PC-3 (cell line): ENCODE measurements at regions of chr13 and their contacts with region 1.

Region 1: DNA sequence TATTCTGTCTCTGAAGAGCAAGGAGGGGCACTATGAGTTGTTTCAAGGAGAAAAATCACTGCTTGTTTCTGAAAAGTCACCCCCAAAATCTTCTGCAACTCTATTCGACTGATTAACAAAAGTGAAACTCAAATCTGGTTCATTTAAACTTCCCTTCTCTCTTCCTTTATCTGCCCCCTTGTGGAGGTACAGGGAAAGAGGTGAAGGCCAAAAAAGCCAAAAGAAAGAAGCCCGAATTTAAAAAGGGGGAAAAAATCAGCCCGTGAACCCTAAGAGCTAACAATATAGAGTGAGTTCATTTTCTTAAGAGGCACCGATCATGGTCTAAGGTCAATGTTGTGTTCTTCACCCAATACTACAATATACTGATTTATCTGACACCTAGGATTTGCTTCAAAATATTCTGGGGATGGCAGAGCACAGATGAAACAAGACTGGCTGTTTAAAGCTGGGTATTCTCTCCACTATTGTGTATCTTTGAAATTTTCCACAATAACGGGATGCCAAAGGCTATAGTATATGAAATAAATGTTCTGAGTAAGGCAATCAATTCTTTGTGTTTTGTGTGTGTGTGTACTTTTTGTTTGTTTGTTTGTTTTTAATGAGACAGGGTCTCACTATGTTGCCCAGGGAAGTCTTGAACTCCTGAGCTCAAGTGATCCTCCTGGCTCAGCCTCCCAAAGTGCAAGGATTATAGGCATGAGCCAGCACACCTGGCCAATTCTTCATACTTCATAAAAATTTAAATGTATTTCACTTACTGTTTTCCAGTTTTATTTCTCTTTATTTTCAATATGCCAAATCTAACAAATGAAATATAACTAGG is 55.0 kb upstream of the EEF1AKMT1 start:
- DNase-seq: peak; percentile 75
- ATAC-seq: peak; percentile 45; the same call in 1 of the 2 replicates
- H3K4me3 ChIP-seq: peak overlapping the region; percentile 26; the same call in 1 of the 2 replicates
- H3K27ac ChIP-seq: no peak overlapping the region
- H3K4me1 ChIP-seq: peaks cover 10% of the 10 kb centered on the region; the same call in 1 of the 2 replicates
- H3K27me3 ChIP-seq: no peaks in the 10 kb centered on the region
- CTCF ChIP-seq: peak; percentile 93

Region 2: DNA sequence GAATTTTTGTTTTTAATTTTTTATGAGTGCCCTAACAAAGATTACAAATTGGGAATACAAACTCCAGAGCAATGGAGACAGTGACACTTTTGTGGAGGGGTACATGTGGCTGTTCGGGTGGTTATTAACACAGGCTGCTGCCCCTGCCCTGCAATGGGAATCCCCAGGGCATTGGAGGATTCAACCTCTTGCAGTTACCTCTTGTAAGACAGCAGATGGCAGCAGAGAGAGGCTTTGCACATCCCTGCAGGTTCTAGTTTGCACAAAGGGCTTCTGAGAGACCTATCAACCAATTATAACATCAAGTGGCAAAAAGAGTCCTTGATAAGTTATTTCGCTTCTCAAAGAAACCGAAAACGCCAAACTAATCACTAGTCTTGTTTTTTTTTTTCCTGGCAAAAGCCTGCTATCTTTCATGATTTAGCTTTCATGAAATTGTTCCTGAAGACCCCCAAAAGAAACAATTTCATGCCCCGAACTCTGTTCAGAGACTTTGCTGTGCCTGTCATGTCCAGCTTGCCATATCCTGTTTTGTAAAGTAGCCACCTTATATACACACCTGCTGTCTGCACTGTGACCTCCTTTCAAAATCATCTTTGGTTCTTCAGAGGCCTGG is 646.4 kb before region 1 on chr13:
- CTCF ChIA-PET with region 1: no interaction called
- POLR2A ChIA-PET with region 1: no interaction called
- intact Hi-C with region 1: loop called (anchors 5 kb)
- DNase-seq: peak; percentile 86
- ATAC-seq: peak; percentile 98
- H3K4me3 ChIP-seq: no peak overlapping the region
- H3K27ac ChIP-seq: no peak overlapping the region
- H3K4me1 ChIP-seq: no peaks in the 10 kb centered on the region
- H3K27me3 ChIP-seq: no peaks in the 10 kb centered on the region
- CTCF ChIP-seq: peak; percentile 91

Region 3: DNA sequence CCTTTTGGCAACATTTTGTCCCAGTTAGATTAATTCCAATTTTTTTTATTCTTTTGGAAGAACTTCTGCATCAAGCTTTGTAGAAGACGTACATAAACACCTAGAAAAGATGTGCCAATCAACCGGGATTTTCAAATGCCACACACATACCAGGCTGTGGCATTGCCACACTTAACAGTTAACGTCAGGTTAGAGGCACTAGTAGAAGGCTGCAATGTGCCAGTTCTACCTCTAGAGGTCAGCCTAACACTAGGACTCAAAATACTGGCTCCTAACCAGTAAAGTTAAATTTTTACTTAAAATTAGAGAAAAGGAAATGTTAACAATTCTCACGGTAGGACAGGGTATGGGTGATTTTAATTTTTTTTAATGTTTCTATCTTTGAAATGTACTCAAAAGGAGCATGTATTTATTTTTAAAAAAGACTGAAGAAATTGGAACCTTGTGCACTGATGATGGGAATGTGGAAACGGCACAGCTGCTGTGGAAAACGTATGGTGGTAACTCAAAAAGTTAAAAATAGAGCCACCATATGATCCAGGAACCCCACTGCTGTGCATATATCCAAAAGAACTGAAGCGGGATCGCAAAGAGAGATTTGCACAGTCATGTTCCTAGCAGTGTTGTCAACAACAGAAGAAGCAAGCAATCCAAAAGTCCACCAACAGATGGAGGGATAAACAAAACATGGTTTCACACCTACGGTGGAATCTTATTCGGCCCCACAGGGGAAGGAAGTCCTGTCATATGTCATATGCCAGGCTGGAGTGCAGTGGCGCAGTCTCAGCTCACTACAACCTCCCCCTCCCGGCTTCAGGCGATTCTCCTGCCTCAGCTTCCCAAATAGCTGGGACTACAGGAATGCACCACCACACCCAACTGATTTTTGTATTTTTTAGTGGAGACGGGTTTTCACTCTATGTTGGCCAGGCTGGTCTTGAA is 333.4 kb before region 1 on chr13:
- CTCF ChIA-PET with region 1: interaction called, 4 read pairs
- POLR2A ChIA-PET with region 1: no interaction called
- intact Hi-C with region 1: loop called (anchors 2 kb)
- DNase-seq: peak; percentile 90
- ATAC-seq: peak; percentile 72
- H3K4me3 ChIP-seq: no peak overlapping the region
- H3K27ac ChIP-seq: no peak overlapping the region
- H3K4me1 ChIP-seq: peaks cover 27% of the 10 kb centered on the region
- H3K27me3 ChIP-seq: no peaks in the 10 kb centered on the region
- CTCF ChIP-seq: peak; percentile 98

Region 4: DNA sequence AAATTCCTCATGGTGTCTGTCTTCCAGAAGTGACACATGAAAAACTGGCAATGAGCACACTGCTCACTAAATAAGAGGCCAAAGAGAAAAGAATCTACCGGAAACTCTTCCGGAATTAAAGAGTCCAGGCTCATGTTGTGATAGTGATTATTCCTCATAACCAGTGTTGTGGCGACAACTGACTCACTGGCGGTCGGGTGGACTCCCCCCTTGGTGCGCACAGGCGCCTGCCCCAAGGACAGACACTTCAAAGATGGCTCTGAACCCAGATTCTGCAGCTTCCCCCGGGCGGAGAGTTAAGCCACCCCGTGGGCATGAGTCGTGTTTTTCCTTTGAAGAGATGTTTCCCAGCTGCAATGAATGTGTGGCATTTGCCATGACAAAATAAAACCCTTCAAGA is 115.0 kb before region 1 on chr13:
- CTCF ChIA-PET with region 1: interaction called, 6 read pairs
- POLR2A ChIA-PET with region 1: no interaction called
- intact Hi-C with region 1: loop called (anchors 1 kb)
- DNase-seq: no peak
- ATAC-seq: no peak
- H3K4me3 ChIP-seq: no peak overlapping the region
- H3K27ac ChIP-seq: no peak overlapping the region
- H3K4me1 ChIP-seq: peaks cover 3% of the 10 kb centered on the region; the same call in 1 of the 2 replicates
- H3K27me3 ChIP-seq: no peaks in the 10 kb centered on the region
- CTCF ChIP-seq: no peak

Region 5: GRCh38 chr13:20814224-20814910 is 14.4 kb before region 1 on chr13:
- CTCF ChIA-PET with region 1: no interaction called
- POLR2A ChIA-PET with region 1: no interaction called
- intact Hi-C with region 1: loop called (anchors 1 kb)
- DNase-seq: peak; percentile 82
- ATAC-seq: peak; percentile 81
- H3K4me3 ChIP-seq: peak overlapping the region; percentile 8; the same call in 1 of the 2 replicates
- H3K27ac ChIP-seq: peak overlapping the region; percentile 25
- H3K4me1 ChIP-seq: peaks cover 26% of the 10 kb centered on the region
- H3K27me3 ChIP-seq: no peaks in the 10 kb centered on the region
- CTCF ChIP-seq: no peak

Region 6: DNA sequence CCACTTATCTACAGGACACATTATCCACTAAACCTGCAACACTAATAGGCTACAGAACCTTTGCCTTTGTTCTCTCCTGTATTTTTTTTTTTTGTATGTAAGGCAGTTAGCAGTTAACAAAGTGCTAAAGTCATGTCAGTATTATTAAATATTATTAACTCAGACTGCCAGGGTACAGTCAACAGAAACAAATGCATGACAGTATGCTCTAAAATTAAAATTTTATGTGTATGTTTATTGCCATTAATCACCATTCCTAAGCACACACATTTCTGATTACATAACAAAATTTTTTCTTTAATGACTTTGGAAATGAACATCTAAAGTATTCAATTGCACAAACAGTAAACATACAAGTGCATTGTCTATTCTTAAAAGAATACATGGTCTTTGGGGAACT is 32.1 kb after region 1 on chr13:
- CTCF ChIA-PET with region 1: no interaction called
- POLR2A ChIA-PET with region 1: no interaction called
- intact Hi-C with region 1: loop called (anchors 2 kb)
- DNase-seq: no peak
- ATAC-seq: peak; percentile 69
- H3K4me3 ChIP-seq: no peak overlapping the region
- H3K27ac ChIP-seq: no peak overlapping the region
- H3K4me1 ChIP-seq: no peaks in the 10 kb centered on the region
- H3K27me3 ChIP-seq: no peaks in the 10 kb centered on the region
- CTCF ChIP-seq: no peak

Region 7: GRCh38 chr13:20869542-20869941 is 40.8 kb after region 1 on chr13:
- CTCF ChIA-PET with region 1: no interaction called
- POLR2A ChIA-PET with region 1: no interaction called
- intact Hi-C with region 1: loop called (anchors 2 kb)
- DNase-seq: peak; percentile 16
- ATAC-seq: peak; percentile 37
- H3K4me3 ChIP-seq: no peak overlapping the region
- H3K27ac ChIP-seq: no peak overlapping the region
- H3K4me1 ChIP-seq: peaks cover 13% of the 10 kb centered on the region
- H3K27me3 ChIP-seq: no peaks in the 10 kb centered on the region
- CTCF ChIP-seq: peak; percentile 42; the same call in 1 of the 2 replicates